ENCODE measurements at regions of chr18 and their contacts with region 1.

Region 1: GRCh38 chr18:63492851-63493250 is 16.1 kb downstream of the SERPINB5 start:
- DNase-seq: no peak
- H3K4me3 ChIP-seq: no peak overlapping the region
- H3K27ac ChIP-seq: no peak overlapping the region
- H3K4me1 ChIP-seq: no peaks in the 10 kb centered on the region
- H3K27me3 ChIP-seq: no peaks in the 10 kb centered on the region
- CTCF ChIP-seq: no peak

Region 2: DNA sequence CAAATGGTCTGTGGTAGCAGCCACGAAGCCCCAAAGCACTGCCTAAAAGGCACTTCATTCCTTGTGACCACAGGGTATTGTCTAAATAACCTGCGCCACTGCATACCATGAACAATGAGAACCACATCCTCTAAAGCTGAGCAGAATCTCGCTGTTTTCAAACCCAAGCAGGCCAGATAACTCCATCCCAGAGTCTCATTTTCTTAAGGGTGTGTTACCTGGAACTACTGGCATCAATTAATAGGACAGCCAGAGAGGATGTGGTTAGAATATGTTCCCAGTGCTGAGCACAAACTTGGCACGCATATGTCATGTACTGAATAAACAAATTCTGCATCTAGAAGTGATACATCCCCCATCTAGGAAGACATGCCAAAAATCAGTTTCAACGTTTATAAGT is 83.5 kb before region 1 on chr18:
- CTCF ChIA-PET with region 1: no interaction called
- POLR2A ChIA-PET with region 1: no interaction called
- intact Hi-C with region 1: loop called (anchors 10 kb)
- DNase-seq: no peak
- H3K4me3 ChIP-seq: no peak overlapping the region
- H3K27ac ChIP-seq: no peak overlapping the region
- H3K4me1 ChIP-seq: no peaks in the 10 kb centered on the region
- H3K27me3 ChIP-seq: no peaks in the 10 kb centered on the region
- CTCF ChIP-seq: no peak